ENCODE measurements at regions of chr10 and their contacts with region 1.

Region 1: GRCh38 chr10:33365871-33366411 is 31.5 kb upstream of the NRP1 start:
- DNase-seq: peak; percentile 100
- ATAC-seq: peak; percentile 90
- H3K4me3 ChIP-seq: peak overlapping the region; percentile 9; the same call in 1 of the 2 replicates
- H3K27ac ChIP-seq: peak overlapping the region; percentile 82
- H3K4me1 ChIP-seq: peaks cover 53% of the 10 kb centered on the region
- H3K27me3 ChIP-seq: no peaks in the 10 kb centered on the region
- CTCF ChIP-seq: no peak

Region 2: GRCh38 chr10:33174674-33175434 is 191.1 kb before region 1 on chr10:
- CTCF ChIA-PET with region 1: no interaction called
- POLR2A ChIA-PET with region 1: no interaction called
- intact Hi-C with region 1: no loop called
- DNase-seq: peak; percentile 65
- ATAC-seq: peak; percentile 53
- H3K4me3 ChIP-seq: no peak overlapping the region
- H3K27ac ChIP-seq: no peak overlapping the region
- H3K4me1 ChIP-seq: 0 out of 2 replicates have a peak, but pooled peaks cover 10% of the 10 kb centered on the region
- H3K27me3 ChIP-seq: no peaks in the 10 kb centered on the region
- CTCF ChIP-seq: no peak

Region 3: GRCh38 chr10:33341637-33342036 is 24.3 kb before region 1 on chr10:
- CTCF ChIA-PET with region 1: no interaction called
- POLR2A ChIA-PET with region 1: interaction called, 14 read pairs
- intact Hi-C with region 1: loop called (anchors 1 kb)
- DNase-seq: peak; percentile 96
- ATAC-seq: peak; percentile 54
- H3K4me3 ChIP-seq: peak overlapping the region; percentile 56
- H3K27ac ChIP-seq: peak overlapping the region; percentile 52
- H3K4me1 ChIP-seq: peaks cover 68% of the 10 kb centered on the region
- H3K27me3 ChIP-seq: no peaks in the 10 kb centered on the region
- CTCF ChIP-seq: no peak

Region 4: GRCh38 chr10:33352175-33352574 is 13.8 kb before region 1 on chr10:
- CTCF ChIA-PET with region 1: interaction called, 3 read pairs
- POLR2A ChIA-PET with region 1: interaction called, 15 read pairs
- intact Hi-C with region 1: loop called (anchors 1 kb)
- DNase-seq: peak; percentile 100
- ATAC-seq: peak; percentile 69
- H3K4me3 ChIP-seq: peak overlapping the region; percentile 48
- H3K27ac ChIP-seq: peak overlapping the region; percentile 63
- H3K4me1 ChIP-seq: peaks cover 82% of the 10 kb centered on the region
- H3K27me3 ChIP-seq: no peaks in the 10 kb centered on the region
- CTCF ChIP-seq: no peak

Region 5: DNA sequence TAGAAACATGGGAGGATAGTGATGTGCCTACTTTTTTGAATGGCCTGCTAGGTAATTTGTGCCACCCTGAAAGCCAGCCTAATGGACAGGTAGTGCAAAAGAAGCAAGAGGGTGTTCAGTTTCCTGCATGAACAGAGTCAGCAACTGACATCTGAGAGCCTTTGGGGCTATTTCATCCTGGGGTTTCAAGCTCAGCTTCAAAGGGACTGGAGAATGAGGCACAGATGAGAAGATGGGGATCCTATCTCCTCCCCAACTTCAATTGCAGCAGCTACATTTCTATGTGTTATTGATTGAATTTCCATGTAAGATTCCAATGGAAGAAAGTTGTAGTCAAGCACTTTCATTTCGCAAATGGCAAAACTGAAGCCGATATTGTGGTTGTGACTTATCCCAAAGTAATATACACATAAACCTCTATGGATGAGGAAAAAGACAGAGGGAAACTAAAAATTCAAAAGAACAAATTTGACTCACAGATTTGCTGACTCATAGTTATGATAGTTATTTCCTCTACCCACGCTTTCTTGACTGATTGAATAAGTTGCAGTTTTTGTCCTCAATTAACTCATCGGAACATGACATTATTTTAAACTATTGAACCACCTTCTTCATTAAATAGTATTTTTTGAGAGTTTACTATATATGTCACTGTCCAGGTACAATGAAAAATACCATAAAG is 11.2 kb after region 1 on chr10:
- CTCF ChIA-PET with region 1: no interaction called
- POLR2A ChIA-PET with region 1: interaction called, 4 read pairs
- intact Hi-C with region 1: loop called (anchors 1 kb)
- DNase-seq: peak; percentile 97
- ATAC-seq: peak; percentile 89
- H3K4me3 ChIP-seq: peak overlapping the region; percentile 49
- H3K27ac ChIP-seq: peak overlapping the region; percentile 75
- H3K4me1 ChIP-seq: peaks cover 23% of the 10 kb centered on the region
- H3K27me3 ChIP-seq: no peaks in the 10 kb centered on the region
- CTCF ChIP-seq: no peak

Region 6: GRCh38 chr10:33412653-33413361 is 46.9 kb after region 1 on chr10:
- CTCF ChIA-PET with region 1: no interaction called
- POLR2A ChIA-PET with region 1: no interaction called
- intact Hi-C with region 1: no loop called
- DNase-seq: peak; percentile 85
- ATAC-seq: peak; percentile 54
- H3K4me3 ChIP-seq: no peak overlapping the region
- H3K27ac ChIP-seq: peak overlapping the region; percentile 15
- H3K4me1 ChIP-seq: peaks cover 16% of the 10 kb centered on the region
- H3K27me3 ChIP-seq: no peaks in the 10 kb centered on the region
- CTCF ChIP-seq: no peak

Region 7: GRCh38 chr10:33509231-33509831 is 143.4 kb after region 1 on chr10:
- CTCF ChIA-PET with region 1: no interaction called
- POLR2A ChIA-PET with region 1: no interaction called
- intact Hi-C with region 1: loop called (anchors 2 kb)
- DNase-seq: peak; percentile 100
- ATAC-seq: peak; percentile 97
- H3K4me3 ChIP-seq: peak overlapping the region; percentile 41
- H3K27ac ChIP-seq: peak overlapping the region; percentile 65
- H3K4me1 ChIP-seq: peaks cover 28% of the 10 kb centered on the region
- H3K27me3 ChIP-seq: no peaks in the 10 kb centered on the region
- CTCF ChIP-seq: no peak

Region 8: DNA sequence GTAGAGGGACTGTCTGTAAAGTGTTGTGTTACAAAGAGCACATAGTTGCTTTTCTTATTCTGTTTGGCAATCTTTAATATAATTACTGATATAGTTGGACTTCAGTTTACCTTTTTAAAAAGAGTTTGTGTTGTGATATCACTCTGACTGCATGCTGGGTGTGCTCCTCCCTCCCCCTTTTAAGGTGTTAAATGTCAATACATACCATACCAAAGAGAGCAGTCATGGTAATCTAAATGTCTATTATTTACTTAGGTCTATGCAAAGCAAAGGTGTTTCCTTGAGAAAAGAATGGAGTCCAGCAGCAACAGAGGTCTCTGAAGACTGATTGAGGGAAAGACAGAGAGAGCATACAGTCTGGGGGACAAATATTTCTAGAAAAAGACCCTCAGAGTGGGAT is 243.6 kb after region 1 on chr10:
- CTCF ChIA-PET with region 1: no interaction called
- POLR2A ChIA-PET with region 1: no interaction called
- intact Hi-C with region 1: loop called (anchors 1 kb)
- DNase-seq: peak; percentile 98
- ATAC-seq: peak; percentile 99
- H3K4me3 ChIP-seq: peak overlapping the region; percentile 1; the same call in 1 of the 2 replicates
- H3K27ac ChIP-seq: peak overlapping the region; percentile 41
- H3K4me1 ChIP-seq: peaks cover 19% of the 10 kb centered on the region
- H3K27me3 ChIP-seq: no peaks in the 10 kb centered on the region
- CTCF ChIP-seq: no peak

Region 9: GRCh38 chr10:33901166-33901565 is 535.2 kb after region 1 on chr10:
- CTCF ChIA-PET with region 1: no interaction called
- POLR2A ChIA-PET with region 1: no interaction called
- intact Hi-C with region 1: loop called (anchors 5 kb)
- DNase-seq: peak; percentile 98
- ATAC-seq: peak; percentile 83
- H3K4me3 ChIP-seq: no peak overlapping the region
- H3K27ac ChIP-seq: peak overlapping the region; percentile 68
- H3K4me1 ChIP-seq: peaks cover 29% of the 10 kb centered on the region
- H3K27me3 ChIP-seq: no peaks in the 10 kb centered on the region
- CTCF ChIP-seq: peak; percentile 40; the same call in 1 of the 2 replicates